ENCODE measurements at regions of chr7 and their contacts with region 1.

Region 1: DNA sequence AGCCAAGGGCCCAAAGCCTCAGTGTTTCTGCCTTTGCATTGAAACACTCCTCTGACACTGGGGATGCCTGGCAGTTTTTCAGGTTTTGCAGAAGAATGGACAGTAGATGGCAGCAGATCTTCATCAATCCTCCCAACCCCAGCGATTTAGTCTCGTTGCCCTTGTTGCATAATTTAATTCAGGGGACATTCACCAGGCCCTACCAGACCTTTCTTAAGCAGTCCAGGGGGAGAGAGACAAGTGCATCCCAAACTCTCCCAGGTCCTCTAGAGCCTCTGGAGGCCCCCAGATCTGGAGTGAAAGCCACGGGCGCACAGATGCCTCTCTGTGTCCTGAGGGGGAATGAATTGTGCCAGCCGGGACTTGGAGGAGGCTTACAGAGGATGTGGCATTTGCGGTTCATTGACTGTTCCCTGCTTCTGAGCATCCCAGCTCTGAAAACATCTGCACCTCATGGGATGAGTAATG is 29.6 kb downstream of the MINDY4 start:
- DNase-seq: peak; percentile 80
- H3K4me3 Mint-ChIP-seq: no peak overlapping the region
- H3K27ac Mint-ChIP-seq: no peak overlapping the region
- H3K4me1 Mint-ChIP-seq: peaks cover 43% of the 10 kb centered on the region
- H3K27me3 Mint-ChIP-seq: no peaks in the 10 kb centered on the region
- CTCF ChIP-seq: peak; percentile 80

Region 2: DNA sequence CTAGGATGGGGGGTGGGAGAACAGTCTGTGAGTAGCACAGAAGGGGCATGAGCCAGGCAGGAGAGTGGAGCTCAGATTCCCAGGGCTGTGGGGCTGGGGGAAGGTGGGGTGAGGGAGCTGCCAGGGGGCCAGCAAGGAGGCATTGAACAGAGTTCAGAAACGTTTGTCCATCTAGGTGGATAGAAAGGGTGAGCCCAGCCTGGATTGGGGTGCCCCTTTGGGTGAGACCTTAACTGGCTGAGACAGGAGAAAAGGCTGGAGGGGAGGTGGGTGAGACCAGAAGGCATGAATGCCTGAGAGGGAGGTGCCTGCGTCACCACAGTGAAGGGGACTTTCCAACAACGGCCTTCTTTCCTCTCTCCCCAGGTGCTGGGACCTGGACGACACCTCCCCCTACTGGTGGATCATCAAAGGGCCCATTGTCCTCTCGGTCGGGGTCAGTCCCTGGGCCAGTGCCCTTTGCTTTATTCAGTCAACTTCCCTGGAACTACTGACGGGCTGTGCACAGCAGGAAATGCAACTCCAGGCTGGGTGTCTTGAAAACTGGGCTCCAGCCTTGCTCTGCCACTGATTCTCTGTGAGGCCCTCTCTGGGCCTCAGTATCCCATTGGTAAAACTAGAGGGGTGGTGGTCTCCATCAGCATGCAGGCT is 173.9 kb after region 1 on chr7:
- CTCF ChIA-PET with region 1: interaction called, 27 read pairs
- POLR2A ChIA-PET with region 1: no interaction called
- intact Hi-C with region 1: loop called (anchors 1 kb)
- DNase-seq: peak; percentile 77
- H3K4me3 Mint-ChIP-seq: no peak overlapping the region
- H3K27ac Mint-ChIP-seq: no peak overlapping the region
- H3K4me1 Mint-ChIP-seq: no peaks in the 10 kb centered on the region
- H3K27me3 Mint-ChIP-seq: peaks cover 60% of the 10 kb centered on the region
- CTCF ChIP-seq: peak; percentile 71

Measured in MCF 10A (cell line).